Left colon (tissue), 2 donors: ENCODE measurements at regions of chr5 and their contacts with region 1.

Region 1: DNA sequence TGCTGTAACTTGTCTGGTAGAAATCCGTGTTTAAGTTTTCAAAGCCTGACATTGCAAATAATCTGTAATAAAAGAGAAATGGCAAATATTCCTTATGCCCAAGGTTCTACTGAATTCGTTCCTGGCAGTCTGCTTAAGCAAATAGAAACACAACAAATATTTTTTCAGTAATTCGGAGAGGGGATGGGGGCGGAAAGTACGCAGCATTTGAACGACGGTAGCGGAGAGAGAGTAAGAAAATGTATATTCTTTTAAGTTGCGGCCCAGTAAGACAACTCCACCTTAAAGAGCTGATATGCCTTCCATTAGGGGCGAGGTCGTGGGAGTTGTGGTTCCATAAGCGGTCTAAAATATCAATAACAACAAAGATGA is 569 bp downstream of the YIPF5 start:
- DNase-seq: no peak
- ATAC-seq: peak; percentile 10

Region 2: GRCh38 chr5:142915813-142916424 is 1254.0 kb before region 1 on chr5:
- intact Hi-C with region 1: loop called in 1 of 2 experiments (anchors 10 kb)
- DNase-seq: peak in 1 of 2 donors; percentile 47
- ATAC-seq: peak; percentile 75